ENCODE measurements at regions of chr5 and their contacts with region 1.

Region 1: GRCh38 chr5:40410231-40410861 is 269.4 kb upstream of the PTGER4 start:
- DNase-seq: peak; percentile 76
- H3K4me3 Mint-ChIP-seq: peak overlapping the region; percentile 72
- H3K27ac Mint-ChIP-seq: peak overlapping the region; percentile 95
- H3K4me1 Mint-ChIP-seq: peaks cover 70% of the 10 kb centered on the region
- H3K27me3 Mint-ChIP-seq: no peaks in the 10 kb centered on the region

Region 2: GRCh38 chr5:40046792-40047191 is 363.6 kb before region 1 on chr5:
- intact Hi-C with region 1: no loop called
- DNase-seq: no peak
- H3K4me3 Mint-ChIP-seq: no peak overlapping the region
- H3K27ac Mint-ChIP-seq: no peak overlapping the region
- H3K4me1 Mint-ChIP-seq: peaks cover 8% of the 10 kb centered on the region
- H3K27me3 Mint-ChIP-seq: peaks cover 2% of the 10 kb centered on the region

Region 3: GRCh38 chr5:40307920-40308319 is 102.4 kb before region 1 on chr5:
- intact Hi-C with region 1: no loop called
- DNase-seq: no peak
- H3K4me3 Mint-ChIP-seq: no peak overlapping the region
- H3K27ac Mint-ChIP-seq: no peak overlapping the region
- H3K4me1 Mint-ChIP-seq: peaks cover 12% of the 10 kb centered on the region
- H3K27me3 Mint-ChIP-seq: no peaks in the 10 kb centered on the region

Region 4: GRCh38 chr5:40333459-40334244 is 76.7 kb before region 1 on chr5:
- intact Hi-C with region 1: loop called (anchors 1 kb)
- DNase-seq: no peak
- H3K4me3 Mint-ChIP-seq: no peak overlapping the region
- H3K27ac Mint-ChIP-seq: peak overlapping the region; percentile 27
- H3K4me1 Mint-ChIP-seq: peaks cover 43% of the 10 kb centered on the region
- H3K27me3 Mint-ChIP-seq: no peaks in the 10 kb centered on the region

Region 5: DNA sequence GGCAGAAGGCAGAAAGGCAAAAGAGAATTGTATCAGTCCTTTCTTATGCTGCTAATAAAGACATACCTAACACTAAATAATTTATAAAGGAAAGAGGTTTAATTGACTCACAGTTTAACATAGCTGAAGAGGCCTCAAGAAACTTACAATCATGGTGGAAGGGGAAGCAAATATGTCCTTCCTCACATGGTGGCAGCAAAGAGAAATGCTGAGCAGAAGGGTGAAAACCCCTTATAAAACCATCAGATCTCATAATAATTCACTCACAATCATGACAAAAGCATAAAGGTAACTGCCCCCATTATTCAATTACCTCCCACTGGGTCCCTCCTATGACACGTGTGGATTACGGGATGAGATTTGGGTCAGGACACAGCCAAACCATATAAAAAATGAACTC is 43.1 kb before region 1 on chr5:
- intact Hi-C with region 1: no loop called
- DNase-seq: no peak
- H3K4me3 Mint-ChIP-seq: no peak overlapping the region
- H3K27ac Mint-ChIP-seq: no peak overlapping the region
- H3K4me1 Mint-ChIP-seq: peaks cover 13% of the 10 kb centered on the region
- H3K27me3 Mint-ChIP-seq: peaks cover 6% of the 10 kb centered on the region

Region 6: DNA sequence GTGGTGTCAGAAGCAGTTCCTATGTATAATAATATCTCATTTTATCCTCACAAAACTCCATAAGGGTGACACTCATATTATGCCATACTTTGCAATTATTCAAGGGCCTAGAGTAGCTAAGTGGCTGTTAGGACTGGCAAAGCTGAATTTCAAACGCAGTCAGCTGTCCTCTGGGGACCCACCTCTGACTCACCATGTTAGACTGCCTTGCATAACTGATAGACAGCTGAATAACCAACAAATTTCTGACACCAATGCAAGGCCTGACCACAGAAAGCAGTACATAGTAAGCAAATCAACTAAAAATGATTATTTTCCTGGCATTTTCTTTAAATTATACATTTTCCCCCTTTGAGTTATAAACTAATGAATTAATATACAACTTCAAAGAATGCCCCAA is 17.8 kb after region 1 on chr5:
- intact Hi-C with region 1: loop called (anchors 2 kb)
- DNase-seq: no peak
- H3K4me3 Mint-ChIP-seq: no peak overlapping the region
- H3K27ac Mint-ChIP-seq: no peak overlapping the region
- H3K4me1 Mint-ChIP-seq: peaks cover 43% of the 10 kb centered on the region
- H3K27me3 Mint-ChIP-seq: no peaks in the 10 kb centered on the region

Region 7: DNA sequence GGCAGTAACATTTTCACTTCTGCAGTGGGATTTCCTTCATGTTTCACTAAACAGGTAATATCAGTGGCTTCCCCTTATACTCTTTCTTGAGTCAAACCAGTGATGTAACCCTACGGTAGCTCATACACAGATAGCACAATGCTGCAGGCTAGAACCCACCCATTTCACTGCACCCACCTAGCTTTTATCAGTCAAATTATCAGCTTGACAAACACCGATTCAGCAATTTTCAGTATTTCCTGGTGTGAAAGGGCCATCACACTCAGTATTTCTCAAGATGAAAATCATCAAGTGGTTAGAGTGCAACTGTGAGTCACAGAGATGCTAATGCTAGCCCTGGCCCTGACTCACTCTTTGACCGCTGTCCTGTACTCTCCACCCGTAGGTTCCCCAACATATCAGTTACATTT is 27.1 kb after region 1 on chr5:
- intact Hi-C with region 1: loop called (anchors 1 kb)
- DNase-seq: no peak
- H3K4me3 Mint-ChIP-seq: peak overlapping the region; percentile 13
- H3K27ac Mint-ChIP-seq: peak overlapping the region; percentile 71
- H3K4me1 Mint-ChIP-seq: peaks cover 84% of the 10 kb centered on the region
- H3K27me3 Mint-ChIP-seq: no peaks in the 10 kb centered on the region